ENCODE measurements at regions of chr2 and their contacts with region 1.

Region 1: DNA sequence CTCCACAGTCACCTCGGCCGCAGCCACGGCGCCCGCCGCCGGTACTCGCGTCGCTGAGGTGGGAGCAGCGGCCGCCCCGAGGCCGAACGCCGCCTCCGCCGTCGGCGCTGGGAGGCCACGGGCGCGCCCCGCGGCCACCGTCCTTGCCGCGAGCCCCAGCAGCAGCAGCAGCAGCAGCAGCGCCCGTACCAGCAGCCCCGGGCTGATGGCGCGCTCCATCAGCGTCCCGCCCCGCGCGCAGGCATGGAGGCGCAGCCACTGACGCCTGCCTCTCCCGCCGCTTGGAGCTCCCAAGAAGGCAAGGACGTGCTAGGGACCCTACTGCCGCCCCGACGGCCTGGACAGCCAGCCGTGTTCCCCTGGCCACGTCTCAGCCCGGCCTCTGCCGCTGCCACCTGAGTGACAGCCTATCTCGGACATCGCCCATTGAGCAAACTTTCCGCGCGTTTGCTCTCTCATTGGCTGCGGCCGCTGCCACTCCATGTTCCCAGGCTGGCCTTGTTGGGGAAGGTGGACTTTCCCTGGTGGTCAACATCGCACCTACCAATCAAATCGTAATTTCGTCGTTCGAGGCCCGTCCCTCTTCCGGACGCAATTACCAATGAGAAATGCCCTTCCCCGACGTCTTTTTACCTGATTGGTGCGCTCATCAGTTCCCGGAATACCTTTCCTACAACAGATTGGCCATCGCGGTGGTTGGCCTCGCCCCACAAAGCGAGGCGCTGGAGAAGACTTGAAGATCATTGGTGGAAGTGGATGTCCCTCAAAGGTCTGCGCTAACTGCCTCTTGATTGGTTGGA is at the start of gene EIF2AK3:
- DNase-seq: peak; percentile 95
- ATAC-seq: peak; percentile 92
- H3K4me3 Mint-ChIP-seq: no peak within 1 kb of the TSS
- H3K27ac Mint-ChIP-seq: peak within 1 kb of the TSS; percentile 91
- H3K4me1 Mint-ChIP-seq: peaks cover 23% of the 10 kb centered on the region
- H3K27me3 Mint-ChIP-seq: no peaks in the 10 kb centered on the region
- total RNA-seq, gene EIF2AK3: 15.9 to 25.1 TPM

Region 2: GRCh38 chr2:88471083-88471942 is 155.9 kb before region 1 on chr2:
- CTCF ChIA-PET with region 1: no interaction called
- POLR2A ChIA-PET with region 1: no interaction called
- intact Hi-C with region 1: no loop called
- DNase-seq: no peak
- ATAC-seq: no peak
- H3K4me3 Mint-ChIP-seq: no peak overlapping the region
- H3K27ac Mint-ChIP-seq: no peak overlapping the region
- H3K4me1 Mint-ChIP-seq: no peaks in the 10 kb centered on the region
- H3K27me3 Mint-ChIP-seq: peaks cover 10% of the 10 kb centered on the region

Region 3: GRCh38 chr2:88590998-88591613 is 36.1 kb before region 1 on chr2:
- CTCF ChIA-PET with region 1: interaction called, 6 read pairs
- POLR2A ChIA-PET with region 1: no interaction called
- intact Hi-C with region 1: loop called (anchors 5 kb)
- DNase-seq: peak; percentile 49
- ATAC-seq: peak; percentile 88
- H3K4me3 Mint-ChIP-seq: no peak overlapping the region
- H3K27ac Mint-ChIP-seq: no peak overlapping the region
- H3K4me1 Mint-ChIP-seq: no peaks in the 10 kb centered on the region
- H3K27me3 Mint-ChIP-seq: no peaks in the 10 kb centered on the region

Region 4: DNA sequence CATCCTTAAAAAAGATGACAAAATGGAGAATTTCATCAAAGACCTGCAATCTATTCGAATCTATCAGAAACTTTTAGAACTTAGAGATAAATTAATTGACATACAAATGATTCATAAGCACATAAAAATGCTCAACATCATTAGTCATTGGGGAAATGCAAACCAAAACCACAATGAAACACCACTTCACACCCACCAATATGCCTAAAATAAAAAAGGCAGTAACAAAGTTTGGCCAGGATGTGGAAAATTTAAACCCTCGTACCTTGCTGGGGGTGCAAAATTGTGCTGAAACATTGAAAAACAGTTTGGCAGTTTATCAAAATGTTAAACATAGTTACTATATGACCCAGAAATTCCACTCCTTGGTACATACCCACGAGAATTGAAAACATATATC is 11.5 kb after region 1 on chr2:
- CTCF ChIA-PET with region 1: no interaction called
- POLR2A ChIA-PET with region 1: no interaction called
- intact Hi-C with region 1: loop called in 1 of 2 experiments (anchors 1 kb)
- DNase-seq: peak; percentile 41
- ATAC-seq: peak; percentile 71
- H3K4me3 Mint-ChIP-seq: no peak overlapping the region
- H3K27ac Mint-ChIP-seq: no peak overlapping the region
- H3K4me1 Mint-ChIP-seq: peaks cover 23% of the 10 kb centered on the region
- H3K27me3 Mint-ChIP-seq: peaks cover 2% of the 10 kb centered on the region

Region 5: GRCh38 chr2:88691339-88692183 is 64.3 kb after region 1 on chr2 and contains the start of gene RPIA:
- CTCF ChIA-PET with region 1: interaction called, 6 read pairs
- POLR2A ChIA-PET with region 1: interaction called, 5 read pairs
- intact Hi-C with region 1: loop called (anchors 1 kb)
- DNase-seq: peak; percentile 99
- ATAC-seq: peak; percentile 96
- H3K4me3 Mint-ChIP-seq: peak within 1 kb of the TSS; percentile 95
- H3K27ac Mint-ChIP-seq: peak within 1 kb of the TSS; percentile 93
- H3K4me1 Mint-ChIP-seq: peaks cover 52% of the 10 kb centered on the region
- H3K27me3 Mint-ChIP-seq: no peaks in the 10 kb centered on the region
- total RNA-seq, gene RPIA: 38.3 to 65.4 TPM

Region 6: GRCh38 chr2:88765154-88765900 is 138.1 kb after region 1 on chr2:
- CTCF ChIA-PET with region 1: no interaction called
- POLR2A ChIA-PET with region 1: no interaction called
- intact Hi-C with region 1: loop called in 1 of 2 experiments (anchors 1 kb)
- DNase-seq: peak; percentile 82
- ATAC-seq: peak; percentile 89
- H3K4me3 Mint-ChIP-seq: peak overlapping the region; percentile 71
- H3K27ac Mint-ChIP-seq: peak overlapping the region; percentile 25
- H3K4me1 Mint-ChIP-seq: peaks cover 11% of the 10 kb centered on the region
- H3K27me3 Mint-ChIP-seq: peaks cover 14% of the 10 kb centered on the region

Measured in activated CD4-positive, alpha-beta T cell treated with anti-CD3 and anti-CD28 coated beads for 36 hours (primary cell).